ENCODE measurements at regions of chr7 and their contacts with region 1.

Region 1: DNA sequence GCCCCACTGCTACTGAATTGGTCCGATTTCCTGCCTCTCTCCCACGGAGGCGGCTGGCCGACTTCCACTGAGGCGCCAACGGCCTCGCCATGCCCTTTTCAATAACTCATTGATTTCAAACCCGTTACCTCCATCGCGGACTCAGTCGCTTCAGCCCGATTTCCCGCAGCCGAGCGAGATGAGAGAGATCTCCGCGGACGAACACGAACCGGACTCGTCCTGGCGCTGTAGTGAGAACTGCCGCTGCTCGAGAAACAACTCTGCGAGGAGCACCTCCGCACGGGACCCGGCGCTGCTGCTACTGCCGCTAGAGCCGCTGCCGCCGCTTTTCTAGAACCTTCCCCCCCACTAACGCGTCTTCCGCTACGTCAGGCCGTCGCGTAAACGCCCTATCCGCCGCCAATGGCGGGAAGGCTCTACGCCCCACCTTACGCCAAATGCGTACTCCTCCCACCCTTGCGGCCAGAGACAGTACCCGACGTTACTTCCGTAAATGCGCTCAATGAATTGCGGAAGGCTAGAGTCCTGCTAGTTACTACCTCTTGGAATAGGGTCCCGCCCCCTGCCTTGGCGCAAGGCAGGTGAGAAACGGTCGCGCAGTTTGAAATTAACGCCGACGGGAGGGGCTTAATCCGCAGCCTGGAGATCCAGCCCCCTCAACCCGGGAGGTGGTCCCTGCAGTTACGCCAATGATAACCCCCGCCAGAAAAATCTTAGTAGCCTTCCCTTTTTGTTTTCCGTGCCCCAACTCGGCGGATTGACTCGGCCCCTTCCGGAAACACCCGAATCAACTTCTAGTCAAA is at the start of gene HNRNPA2B1:
- DNase-seq: peak; percentile 99
- H3K4me3 ChIP-seq: peak within 1 kb of the TSS; percentile 99
- H3K27ac ChIP-seq: peak within 1 kb of the TSS; percentile 100
- H3K4me1 ChIP-seq: peaks cover 42% of the 10 kb centered on the region
- CTCF ChIP-seq: no peak
- total RNA-seq, gene HNRNPA2B1: 258 and 406 TPM in 2 replicates

Region 2: DNA sequence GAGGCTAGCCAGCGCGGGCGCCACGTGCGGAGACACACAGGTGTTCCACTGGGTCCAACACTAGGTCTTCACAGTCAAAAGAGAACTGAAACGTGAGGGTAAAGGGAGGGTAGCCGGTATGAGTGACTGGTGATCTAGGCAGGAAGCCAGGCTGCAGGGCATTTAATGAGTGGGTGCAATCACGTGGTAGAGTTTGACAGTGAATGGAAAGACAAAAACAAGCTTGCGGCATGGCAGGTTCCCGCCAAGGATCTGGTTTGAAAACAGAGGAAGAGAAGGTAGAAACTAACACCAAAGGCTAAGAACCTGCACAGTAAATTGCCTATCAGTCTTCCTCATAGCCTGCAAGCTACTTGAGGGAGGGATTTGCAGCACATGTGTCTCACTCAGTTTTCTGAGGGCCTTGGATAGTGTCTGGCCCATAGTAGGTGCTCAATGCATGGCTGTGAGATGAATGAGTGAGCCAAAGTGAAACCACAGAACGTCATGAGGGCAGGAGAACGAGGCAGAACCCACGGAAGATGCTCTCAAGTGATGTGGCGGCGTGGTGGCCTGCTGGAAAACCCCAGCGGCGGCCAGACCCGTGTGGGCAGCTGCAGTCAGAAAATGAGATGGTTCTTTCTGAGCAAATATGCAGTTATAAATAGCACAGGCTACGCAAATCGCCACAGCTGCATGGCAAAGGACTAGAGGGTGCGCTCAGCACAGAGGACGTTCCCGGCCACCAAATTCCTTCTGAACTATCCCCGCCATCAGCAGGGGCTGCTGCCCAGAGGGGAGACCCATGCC is 232.2 kb before region 1 on chr7:
- CTCF ChIA-PET with region 1: no interaction called
- POLR2A ChIA-PET with region 1: interaction called, 4 read pairs
- intact Hi-C with region 1: loop called (anchors 5 kb)
- DNase-seq: peak; percentile 97
- H3K4me3 ChIP-seq: peak overlapping the region; percentile 35
- H3K27ac ChIP-seq: peak overlapping the region; percentile 94
- H3K4me1 ChIP-seq: peaks cover 67% of the 10 kb centered on the region
- CTCF ChIP-seq: no peak; the same call in 1 of the 2 replicates

Region 3: DNA sequence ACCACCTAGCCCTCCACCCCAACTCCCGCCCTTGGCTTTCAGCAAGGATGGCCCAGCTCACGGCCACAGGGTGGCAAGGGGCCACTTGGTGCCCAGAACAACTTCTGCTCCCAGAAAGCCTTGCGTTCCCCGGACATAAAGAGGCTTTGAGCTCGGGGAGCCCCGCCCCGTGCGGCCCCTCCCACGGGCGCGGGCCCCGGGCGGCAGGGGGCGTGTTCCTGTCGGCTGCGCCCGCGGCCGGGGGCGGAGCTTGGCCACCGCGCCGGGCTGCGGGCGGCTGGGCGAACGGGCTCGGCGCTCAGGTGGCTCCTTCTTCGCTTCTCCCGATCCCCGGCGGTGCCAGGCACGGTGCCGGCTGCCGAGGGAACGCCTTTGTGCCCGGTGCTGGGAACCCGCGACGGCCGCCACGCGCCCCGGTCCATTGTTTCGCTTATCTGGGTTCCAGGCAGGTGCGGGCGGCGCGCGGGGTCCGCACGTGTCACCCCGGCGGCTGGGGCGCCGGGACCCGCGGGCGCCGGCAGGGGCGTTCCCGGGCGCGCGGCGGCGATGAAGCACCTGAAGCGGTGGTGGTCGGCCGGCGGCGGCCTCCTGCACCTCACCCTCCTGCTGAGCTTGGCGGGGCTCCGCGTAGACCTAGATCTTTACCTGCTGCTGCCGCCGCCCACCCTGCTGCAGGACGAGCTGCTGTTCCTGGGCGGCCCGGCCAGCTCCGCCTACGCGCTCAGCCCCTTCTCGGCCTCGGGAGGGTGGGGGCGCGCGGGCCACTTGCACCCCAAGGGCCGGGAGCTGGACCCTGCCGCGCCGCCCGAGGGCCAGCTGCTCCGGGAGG is 48.5 kb before region 1 on chr7 and contains the start of gene NFE2L3:
- CTCF ChIA-PET with region 1: interaction called, 4 read pairs
- POLR2A ChIA-PET with region 1: interaction called, 5 read pairs
- intact Hi-C with region 1: loop called (anchors 1 kb)
- DNase-seq: peak; percentile 92
- H3K4me3 ChIP-seq: peak within 1 kb of the TSS; percentile 73
- H3K27ac ChIP-seq: peak within 1 kb of the TSS; percentile 30
- H3K4me1 ChIP-seq: peaks cover 44% of the 10 kb centered on the region
- CTCF ChIP-seq: 0 out of 2 replicates have a peak, but pooled peaks have one; percentile 18
- total RNA-seq, gene NFE2L3: 10.7 and 13.3 TPM in 2 replicates

Region 4: GRCh38 chr7:26291699-26292538 is 91.3 kb after region 1 on chr7 and contains the start of gene SNX10:
- CTCF ChIA-PET with region 1: no interaction called
- POLR2A ChIA-PET with region 1: interaction called, 3 read pairs
- intact Hi-C with region 1: loop called (anchors 2 kb)
- DNase-seq: peak; percentile 91
- H3K4me3 ChIP-seq: peak within 1 kb of the TSS; percentile 99
- H3K27ac ChIP-seq: peak within 1 kb of the TSS; percentile 74
- H3K4me1 ChIP-seq: peaks cover 37% of the 10 kb centered on the region
- CTCF ChIP-seq: peak; percentile 75
- total RNA-seq, gene SNX10: 14.3 and 14.5 TPM in 2 replicates

Region 5: DNA sequence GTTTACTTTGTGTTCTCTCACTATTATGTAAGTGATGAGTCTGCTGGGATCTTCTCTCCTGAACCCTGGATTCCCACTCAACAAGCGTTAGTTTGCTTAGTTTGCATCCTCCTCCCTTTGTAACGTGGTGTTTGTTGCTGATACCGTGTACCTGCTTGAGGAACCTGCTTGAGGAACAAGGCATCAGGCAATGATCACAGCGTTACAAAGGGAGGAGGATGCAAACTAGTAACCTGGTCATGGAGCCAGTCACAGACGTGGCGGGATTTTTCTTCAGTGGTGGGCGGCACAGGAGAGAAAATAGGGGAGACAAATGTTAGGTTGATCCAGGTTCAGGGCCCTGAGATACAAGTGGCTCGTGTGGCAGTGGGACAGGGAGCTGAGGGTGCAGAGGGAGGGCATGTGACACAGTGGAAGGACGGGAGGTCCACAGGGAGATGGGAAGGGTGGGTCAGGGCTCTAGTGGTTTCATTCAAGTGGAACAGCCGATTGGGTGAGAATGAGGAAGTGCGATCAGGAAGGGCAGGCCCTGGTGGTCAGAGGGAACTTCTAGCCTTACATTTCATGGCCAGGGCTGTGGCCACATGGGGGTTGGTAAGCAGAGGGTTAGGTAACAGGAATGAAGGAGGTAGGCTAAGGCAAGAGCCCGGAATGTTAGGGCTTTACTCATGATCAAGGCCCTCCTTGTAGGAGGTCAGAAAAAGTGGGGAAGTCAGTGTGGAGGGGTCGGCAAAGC is 129.0 kb after region 1 on chr7:
- CTCF ChIA-PET with region 1: no interaction called
- POLR2A ChIA-PET with region 1: no interaction called
- intact Hi-C with region 1: no loop called
- DNase-seq: peak; percentile 54
- H3K4me3 ChIP-seq: peak overlapping the region; percentile 6
- H3K27ac ChIP-seq: peak overlapping the region; percentile 18
- H3K4me1 ChIP-seq: peaks cover 38% of the 10 kb centered on the region
- CTCF ChIP-seq: no peak

Region 6: GRCh38 chr7:26365077-26365900 is 164.6 kb after region 1 on chr7:
- CTCF ChIA-PET with region 1: no interaction called
- POLR2A ChIA-PET with region 1: no interaction called
- intact Hi-C with region 1: loop called (anchors 5 kb)
- DNase-seq: peak; percentile 89
- H3K4me3 ChIP-seq: no peak overlapping the region
- H3K27ac ChIP-seq: peak overlapping the region; percentile 29
- H3K4me1 ChIP-seq: peaks cover 21% of the 10 kb centered on the region
- CTCF ChIP-seq: peak; percentile 93